Right ventricle myocardium inferior (tissue), 1 donor: ENCODE measurements at regions of chr20 and their contacts with region 1.

Region 1: DNA sequence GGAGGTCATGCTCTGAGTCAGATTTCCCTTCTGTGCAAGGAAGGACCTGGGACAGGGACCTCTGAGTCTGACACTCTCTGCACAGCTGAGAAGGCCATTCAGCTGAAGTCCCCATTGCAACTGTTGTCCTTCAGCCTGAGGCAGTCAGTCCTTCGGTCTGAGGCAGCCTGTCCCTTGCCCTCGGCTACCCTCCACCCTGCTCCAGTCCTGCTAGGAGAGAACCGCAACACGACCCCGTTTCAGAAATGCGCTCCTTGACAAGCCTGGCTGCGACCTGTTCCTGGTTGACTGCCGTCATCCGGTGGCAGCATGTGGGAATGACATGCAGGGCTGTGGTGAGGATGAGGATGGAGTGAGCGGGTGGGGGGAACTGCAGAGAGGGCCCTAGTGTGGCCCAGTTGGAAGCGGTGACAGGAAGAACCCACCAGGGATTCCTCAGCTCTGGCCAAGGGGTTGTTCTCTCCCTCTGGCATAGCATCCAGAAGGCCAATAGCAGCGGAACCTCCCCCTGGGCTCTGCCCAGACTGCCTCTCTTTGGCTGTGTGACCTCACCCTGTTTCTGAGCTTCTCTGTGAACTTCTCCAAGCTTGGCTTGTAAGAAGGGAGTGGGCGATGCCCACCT is 40.3 kb upstream of the ANGPT4 start:
- DNase-seq: peak; percentile 84
- ATAC-seq: peak; percentile 73

Region 2: GRCh38 chr20:815914-816606 is 140.4 kb before region 1 on chr20:
- intact Hi-C with region 1: loop called (anchors 1 kb)
- DNase-seq: peak; percentile 82
- ATAC-seq: peak; percentile 20

Region 3: DNA sequence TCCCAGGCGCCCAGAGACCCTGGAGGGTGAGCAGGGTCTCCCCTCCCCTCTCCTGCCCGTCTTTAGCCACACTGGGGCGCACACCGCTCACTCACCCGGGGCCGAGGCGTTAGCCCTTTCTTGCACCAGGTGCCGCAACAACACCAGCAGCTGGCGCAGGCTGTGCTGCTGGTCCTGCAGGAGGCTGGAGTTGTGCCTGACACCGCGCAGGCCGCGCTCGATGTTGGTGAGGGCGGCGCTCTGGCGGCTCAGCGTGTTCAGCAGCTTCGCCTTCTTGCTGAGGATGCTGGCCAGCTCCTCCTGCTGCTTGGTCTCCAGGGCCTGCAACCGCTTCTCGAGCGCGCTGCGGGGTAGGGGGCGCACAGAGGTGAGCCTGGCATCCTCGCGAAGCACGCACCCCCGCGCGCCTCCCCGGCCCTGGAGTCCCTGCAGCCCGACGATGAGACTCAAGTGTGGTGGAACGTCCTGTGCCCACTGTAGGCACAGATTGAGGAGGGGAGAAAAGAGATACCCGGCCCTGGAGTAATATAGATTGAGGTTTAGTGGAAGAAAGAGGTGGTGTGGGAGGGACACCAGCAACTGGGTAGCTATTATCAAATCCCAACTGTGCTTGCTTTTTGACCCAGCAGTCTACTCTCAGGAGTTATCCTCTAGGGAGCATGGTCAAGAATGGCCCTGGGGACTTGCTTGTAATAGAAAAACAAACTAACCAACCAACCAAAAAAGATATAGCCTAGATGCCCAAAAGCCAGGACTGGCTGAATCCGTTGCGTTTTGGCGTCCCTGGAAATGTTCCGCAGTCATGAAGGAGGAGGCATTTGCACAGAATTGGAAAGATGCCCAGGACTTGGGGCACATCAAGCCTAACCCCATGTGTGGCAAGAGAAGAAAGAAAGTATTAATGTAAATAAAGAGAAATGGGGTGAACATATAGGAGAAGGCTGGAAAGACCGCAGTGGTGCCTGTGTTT is 71.2 kb before region 1 on chr20:
- intact Hi-C with region 1: loop called (anchors 10 kb)
- DNase-seq: peak; percentile 87
- ATAC-seq: peak; percentile 65

Region 4: DNA sequence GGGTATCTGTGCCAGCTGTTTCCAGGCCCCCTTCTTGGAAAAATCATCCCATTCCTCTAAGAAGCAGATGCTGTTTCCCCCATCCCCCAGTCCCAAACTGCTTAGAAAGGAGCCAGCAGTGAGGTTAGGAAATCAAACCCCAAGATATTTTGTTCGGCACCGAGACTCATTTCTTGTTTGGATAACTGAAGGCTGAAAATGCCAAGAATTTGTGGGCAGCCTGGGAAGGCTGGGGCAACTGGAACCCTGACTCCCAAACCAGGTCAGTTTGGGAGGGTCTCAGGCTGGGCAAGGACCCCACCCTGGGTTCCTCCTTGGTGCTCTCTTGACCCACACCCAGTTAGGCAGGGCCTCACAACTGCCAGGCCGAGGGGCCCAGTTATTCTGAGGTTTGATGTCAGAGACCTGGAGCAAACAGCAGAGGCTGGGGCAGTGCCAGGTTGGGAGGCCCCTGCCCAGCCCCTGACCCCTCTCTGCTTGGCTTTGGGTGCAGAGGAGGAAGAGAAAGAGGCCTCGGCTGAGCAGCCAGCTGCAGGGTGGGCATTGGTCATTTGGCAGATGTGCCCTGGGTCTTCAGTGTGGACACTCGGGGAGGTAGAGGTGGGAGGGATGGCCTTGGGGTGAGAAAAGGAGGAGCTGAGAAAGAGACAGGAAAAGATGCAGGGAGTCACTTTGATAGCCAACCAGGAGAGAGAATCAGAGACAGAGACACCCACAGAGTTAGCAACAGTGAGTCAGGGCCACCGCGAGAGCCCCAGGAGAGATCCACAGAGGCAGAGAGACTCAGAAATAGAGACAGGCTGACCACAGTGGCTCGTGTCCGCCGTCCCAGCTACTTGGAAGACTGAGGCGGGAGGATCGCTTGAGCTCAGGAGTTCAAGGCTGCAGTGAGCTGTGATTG is 45.3 kb before region 1 on chr20:
- intact Hi-C with region 1: no loop called
- DNase-seq: no peak
- ATAC-seq: peak; percentile 60

Region 5: GRCh38 chr20:1108437-1108920 is 152.0 kb after region 1 on chr20:
- intact Hi-C with region 1: no loop called
- DNase-seq: peak; percentile 72
- ATAC-seq: peak; percentile 62

Region 6: DNA sequence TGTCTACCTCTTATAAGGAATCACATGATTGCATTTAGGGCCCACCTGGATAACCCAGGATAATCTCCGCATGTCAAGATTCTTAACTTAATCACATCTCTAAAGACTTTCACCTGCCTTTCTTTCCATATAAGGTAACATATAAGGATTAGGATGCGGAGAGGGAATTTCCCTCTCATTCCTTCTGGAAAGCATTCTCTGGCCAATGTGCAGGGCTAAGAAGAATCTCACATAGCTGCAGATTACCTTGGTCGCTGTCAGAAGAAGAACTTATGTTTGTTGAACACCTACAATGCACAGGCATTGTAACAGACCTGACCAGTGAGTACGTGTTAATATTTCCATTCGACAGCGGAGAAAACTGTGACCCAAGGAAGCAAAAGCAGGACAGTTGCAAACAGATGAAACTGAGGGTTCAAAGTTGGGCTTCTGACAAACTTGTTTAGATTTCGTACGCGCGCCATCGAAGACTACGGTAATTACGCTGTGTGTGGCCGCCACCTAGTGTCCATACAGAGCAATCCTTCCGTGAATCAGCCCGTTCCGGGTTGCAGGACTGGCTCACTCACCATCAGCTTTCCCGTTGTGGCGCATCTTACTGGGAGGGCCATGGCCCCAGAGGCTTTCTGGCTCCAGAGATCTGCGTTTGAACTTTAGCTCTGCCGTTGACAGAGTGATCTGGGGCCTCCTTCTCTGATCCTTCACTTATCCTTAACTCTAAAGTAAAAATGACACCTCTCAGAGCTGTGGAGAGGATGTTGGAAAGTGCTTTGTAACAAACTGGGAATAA is 256.4 kb after region 1 on chr20:
- intact Hi-C with region 1: loop called (anchors 10 kb)
- DNase-seq: peak; percentile 80
- ATAC-seq: peak; percentile 83